HepG2 (cell line): ENCODE measurements at regions of chr1 and their contacts with region 1.

Region 1: DNA sequence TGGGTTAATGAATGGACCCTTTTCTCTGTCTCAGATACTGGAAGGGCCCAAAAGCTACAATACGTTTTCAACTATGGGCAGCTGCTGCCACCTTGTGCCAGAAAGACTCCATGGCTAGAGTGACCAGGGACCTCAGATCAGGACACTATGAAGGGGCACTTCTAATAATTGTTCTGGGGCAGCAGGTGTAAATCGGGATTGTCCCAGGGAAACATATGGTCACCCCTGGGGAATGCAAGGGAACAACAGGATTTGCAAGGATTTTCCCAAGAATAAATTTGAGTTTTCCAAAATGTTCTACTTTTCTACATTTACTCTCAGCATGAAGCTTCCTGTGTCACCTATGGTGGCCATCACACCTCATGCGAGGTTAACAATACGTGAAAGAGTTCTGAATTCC is 12.0 kb upstream of the FCAMR start:
- DNase-seq: peak; percentile 56
- ATAC-seq: peak; percentile 97
- H3K4me3 ChIP-seq: no peak overlapping the region
- H3K27ac ChIP-seq: no peak overlapping the region
- H3K4me1 ChIP-seq: no peaks in the 10 kb centered on the region
- H3K27me3 ChIP-seq: peaks cover 3 to 30% of the 10 kb centered on the region in 2 experiments; a peak in 4 of 5 replicates
- CTCF ChIP-seq: peak; percentile 88
- EP300 ChIP-seq: no peak
- POLR2A ChIP-seq: no peak
- RAD21 ChIP-seq: peak; percentile 77

Region 2: DNA sequence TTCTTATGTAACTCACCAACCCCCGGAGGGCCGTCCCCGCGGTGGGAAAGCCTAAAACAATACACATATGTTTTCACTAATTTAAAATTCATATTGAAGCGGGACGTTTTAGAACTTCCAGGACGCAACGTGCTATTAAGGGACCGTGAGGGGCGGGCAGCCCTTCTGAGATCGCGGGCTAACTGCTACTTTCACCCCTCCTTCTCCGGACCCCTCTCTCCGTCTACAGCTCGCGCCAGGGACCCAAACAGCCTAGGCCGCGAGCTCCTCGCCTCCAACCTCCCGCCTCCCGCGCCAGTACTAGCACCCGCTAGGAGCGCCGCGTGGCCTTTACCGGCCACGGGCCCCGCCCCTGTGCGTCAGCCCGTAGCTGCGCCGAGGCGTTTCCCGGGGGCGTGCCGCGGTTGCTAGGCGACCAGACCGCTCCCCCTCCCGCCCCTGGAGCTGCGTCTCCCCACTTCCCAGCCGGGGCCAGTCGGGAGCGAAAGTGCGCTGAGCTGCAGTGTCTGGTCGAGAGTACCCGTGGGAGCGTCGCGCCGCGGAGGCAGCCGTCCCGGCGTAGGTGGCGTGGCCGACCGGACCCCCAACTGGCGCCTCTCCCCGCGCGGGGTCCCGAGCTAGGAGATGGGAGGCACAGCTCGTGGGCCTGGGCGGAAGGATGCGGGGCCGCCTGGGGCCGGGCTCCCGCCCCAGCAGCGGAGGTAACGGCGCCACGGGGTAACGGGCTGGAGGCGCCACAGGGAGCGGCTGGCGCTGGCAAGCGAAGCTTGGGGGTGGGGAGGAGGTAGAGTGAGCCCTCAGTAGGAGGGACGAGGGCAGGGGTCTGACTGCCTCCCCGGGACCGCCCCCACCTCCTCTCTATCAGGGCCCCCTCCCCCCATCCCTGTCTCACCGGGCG is 346.9 kb before region 1 on chr1 and contains the start of gene DYRK3:
- CTCF ChIA-PET with region 1: interaction called, 3 read pairs
- POLR2A ChIA-PET with region 1: no interaction called
- in situ Hi-C with region 1: no loop called
- intact Hi-C with region 1: loop called (anchors 5 kb)
- DNase-seq: peak; percentile 76
- ATAC-seq: peak; percentile 96
- H3K4me3 ChIP-seq: peak within 1 kb of the TSS; percentile 68 to 83 (median 81)
- H3K27ac ChIP-seq: no peak within 1 kb of the TSS
- H3K4me1 ChIP-seq: peaks cover 26% of the 10 kb centered on the region
- H3K27me3 ChIP-seq: peaks cover 0 to 3% of the 10 kb centered on the region in 2 experiments; a peak in 2 of 5 replicates
- CTCF ChIP-seq: peak; percentile 25; the same call in 1 of the 2 replicates
- EP300 ChIP-seq: no peak
- POLR2A ChIP-seq: peak; percentile 74 to 91
- RAD21 ChIP-seq: no peak
- total RNA-seq, gene DYRK3: 2.8 and 4.1 TPM in 2 replicates

Region 3: DNA sequence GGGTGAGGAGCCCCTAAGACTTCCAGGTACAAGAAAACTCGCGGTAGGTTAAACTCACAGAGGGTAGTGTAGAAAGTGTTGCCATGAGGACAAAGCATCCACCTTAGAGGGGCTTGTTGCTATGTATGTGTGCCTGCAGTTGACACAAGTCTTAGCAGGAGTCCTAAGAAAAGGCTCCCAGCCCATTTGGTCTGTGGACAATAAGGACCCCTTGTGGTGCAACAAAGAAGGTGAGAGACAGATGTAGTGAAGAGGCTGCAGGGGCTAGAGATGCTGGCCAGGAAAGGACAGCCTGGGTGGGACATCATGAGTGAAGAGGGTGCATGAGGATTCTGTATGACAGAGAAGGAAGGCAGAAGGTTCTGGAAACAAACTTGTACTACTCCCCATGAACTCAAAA is 173.6 kb before region 1 on chr1:
- CTCF ChIA-PET with region 1: no interaction called
- POLR2A ChIA-PET with region 1: no interaction called
- in situ Hi-C with region 1: no loop called
- intact Hi-C with region 1: loop called (anchors 1 kb)
- DNase-seq: peak; percentile 6
- ATAC-seq: peak; percentile 52; the same call in 2 of the 3 replicates
- H3K4me3 ChIP-seq: no peak overlapping the region
- H3K27ac ChIP-seq: no peak overlapping the region
- H3K4me1 ChIP-seq: no peaks in the 10 kb centered on the region
- H3K27me3 ChIP-seq: 0 out of 5 replicates have a peak, but pooled peaks cover 2 to 4% of the 10 kb centered on the region in 2 experiments
- CTCF ChIP-seq: peak; percentile 51
- EP300 ChIP-seq: no peak
- POLR2A ChIP-seq: no peak
- RAD21 ChIP-seq: no peak

Region 4: GRCh38 chr1:206912445-206913095 is 69.6 kb before region 1 on chr1:
- CTCF ChIA-PET with region 1: interaction called, 3 read pairs
- POLR2A ChIA-PET with region 1: no interaction called
- in situ Hi-C with region 1: no loop called
- intact Hi-C with region 1: loop called (anchors 1 kb)
- DNase-seq: peak; percentile 61
- ATAC-seq: peak; percentile 75
- H3K4me3 ChIP-seq: no peak overlapping the region
- H3K27ac ChIP-seq: no peak overlapping the region
- H3K4me1 ChIP-seq: no peaks in the 10 kb centered on the region
- H3K27me3 ChIP-seq: peaks cover 2 to 52% of the 10 kb centered on the region in 2 experiments
- CTCF ChIP-seq: peak; percentile 82
- EP300 ChIP-seq: no peak
- POLR2A ChIP-seq: no peak
- RAD21 ChIP-seq: peak; percentile 62; the same call in 1 of the 2 replicates

Region 5: GRCh38 chr1:206951318-206952100 is 30.7 kb before region 1 on chr1:
- CTCF ChIA-PET with region 1: no interaction called
- POLR2A ChIA-PET with region 1: no interaction called
- in situ Hi-C with region 1: no loop called
- intact Hi-C with region 1: loop called (anchors 1 kb)
- DNase-seq: peak; percentile 67
- ATAC-seq: peak; percentile 93
- H3K4me3 ChIP-seq: peak overlapping the region; percentile 42 to 66 (median 58)
- H3K27ac ChIP-seq: peak overlapping the region; percentile 43
- H3K4me1 ChIP-seq: peaks cover 83% of the 10 kb centered on the region
- H3K27me3 ChIP-seq: no peaks in the 10 kb centered on the region
- CTCF ChIP-seq: no peak
- EP300 ChIP-seq: no peak
- POLR2A ChIP-seq: peak in 1 of 2 experiments; percentile 32; a peak in 1 of 4 replicates
- RAD21 ChIP-seq: no peak

Region 6: GRCh38 chr1:207077470-207078377 is 95.5 kb after region 1 on chr1:
- CTCF ChIA-PET with region 1: interaction called, 7 read pairs
- POLR2A ChIA-PET with region 1: no interaction called
- in situ Hi-C with region 1: no loop called
- intact Hi-C with region 1: loop called (anchors 1 kb)
- DNase-seq: peak; percentile 71
- ATAC-seq: peak; percentile 88
- H3K4me3 ChIP-seq: no peak overlapping the region
- H3K27ac ChIP-seq: no peak overlapping the region
- H3K4me1 ChIP-seq: 0 out of 2 replicates have a peak, but pooled peaks cover 6% of the 10 kb centered on the region
- H3K27me3 ChIP-seq: no peaks in the 10 kb centered on the region
- CTCF ChIP-seq: peak; percentile 92
- EP300 ChIP-seq: no peak
- POLR2A ChIP-seq: no peak
- RAD21 ChIP-seq: peak; percentile 78